Activated T-helper 2 cell treated with anti-CD3 and anti-CD28 coated beads, Interferon-gamma antibody, Interleukin-2, Interleukin-4, amounts not matched to agents 10 μg/mL and 5 μg/mL and 100 μg/mL, durations not matched to agents 14 hours and 24 hours and 36 hours (primary cell): ENCODE measurements at regions of chr5 and their contacts with region 1.

Region 1: DNA sequence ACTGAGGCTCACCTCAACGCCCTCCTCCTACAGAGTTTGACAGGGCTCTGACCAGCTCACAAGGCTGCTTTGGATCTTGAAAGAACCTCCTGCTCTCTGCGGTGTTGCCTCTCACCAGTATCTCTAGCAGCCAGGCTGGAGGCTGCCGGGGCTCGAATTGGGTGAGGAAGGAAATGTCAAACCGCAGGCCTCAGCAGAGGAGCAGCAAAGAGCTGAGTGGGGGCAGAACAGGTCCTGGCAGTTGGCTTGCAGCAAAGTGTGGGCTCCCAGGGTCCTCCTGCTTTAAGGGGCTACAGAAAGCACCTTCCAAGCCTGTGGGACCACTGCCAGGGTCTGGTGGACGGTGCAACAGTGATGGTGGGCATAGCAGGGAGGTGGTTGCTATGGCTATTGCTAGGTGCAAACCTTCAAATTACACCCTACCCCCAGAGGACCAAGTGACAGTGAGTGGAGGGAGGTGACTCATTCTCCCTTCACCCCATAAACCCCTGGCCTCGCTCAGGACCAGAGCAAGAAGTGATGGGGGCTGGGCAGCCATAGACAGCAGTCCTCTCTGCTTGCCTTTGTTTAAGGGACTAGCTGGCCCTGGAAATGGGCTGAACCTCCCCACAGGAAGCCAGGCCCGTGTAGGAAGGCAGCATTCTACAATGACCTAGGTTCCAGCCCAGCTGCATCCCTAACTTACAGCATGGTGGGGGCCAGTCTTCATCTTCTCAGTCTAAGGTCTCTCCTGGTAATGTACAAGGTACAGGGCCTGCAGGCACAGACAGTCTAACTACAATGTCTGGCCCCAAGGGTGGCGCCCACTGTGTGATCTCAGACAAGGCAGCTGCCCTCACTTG is 18.7 kb downstream of the LCP2 start:
- DNase-seq: peak; percentile 90
- H3K4me3 Mint-ChIP-seq: peak overlapping the region; percentile 63
- H3K27ac Mint-ChIP-seq: peak overlapping the region; percentile 98
- H3K4me1 Mint-ChIP-seq: peaks cover 86% of the 10 kb centered on the region
- H3K27me3 Mint-ChIP-seq: no peaks in the 10 kb centered on the region

Region 2: GRCh38 chr5:170293273-170293672 is 14.4 kb after region 1 on chr5:
- intact Hi-C with region 1: loop called (anchors 1 kb)
- DNase-seq: peak; percentile 60
- H3K4me3 Mint-ChIP-seq: peak overlapping the region; percentile 98
- H3K27ac Mint-ChIP-seq: peak overlapping the region; percentile 92
- H3K4me1 Mint-ChIP-seq: peaks cover 76% of the 10 kb centered on the region
- H3K27me3 Mint-ChIP-seq: no peaks in the 10 kb centered on the region

Region 3: GRCh38 chr5:170312666-170313065 is 33.8 kb after region 1 on chr5:
- intact Hi-C with region 1: loop called (anchors 1 kb)
- DNase-seq: no peak
- H3K4me3 Mint-ChIP-seq: peak overlapping the region; percentile 75
- H3K27ac Mint-ChIP-seq: peak overlapping the region; percentile 88
- H3K4me1 Mint-ChIP-seq: peaks cover 50% of the 10 kb centered on the region
- H3K27me3 Mint-ChIP-seq: no peaks in the 10 kb centered on the region

Region 4: DNA sequence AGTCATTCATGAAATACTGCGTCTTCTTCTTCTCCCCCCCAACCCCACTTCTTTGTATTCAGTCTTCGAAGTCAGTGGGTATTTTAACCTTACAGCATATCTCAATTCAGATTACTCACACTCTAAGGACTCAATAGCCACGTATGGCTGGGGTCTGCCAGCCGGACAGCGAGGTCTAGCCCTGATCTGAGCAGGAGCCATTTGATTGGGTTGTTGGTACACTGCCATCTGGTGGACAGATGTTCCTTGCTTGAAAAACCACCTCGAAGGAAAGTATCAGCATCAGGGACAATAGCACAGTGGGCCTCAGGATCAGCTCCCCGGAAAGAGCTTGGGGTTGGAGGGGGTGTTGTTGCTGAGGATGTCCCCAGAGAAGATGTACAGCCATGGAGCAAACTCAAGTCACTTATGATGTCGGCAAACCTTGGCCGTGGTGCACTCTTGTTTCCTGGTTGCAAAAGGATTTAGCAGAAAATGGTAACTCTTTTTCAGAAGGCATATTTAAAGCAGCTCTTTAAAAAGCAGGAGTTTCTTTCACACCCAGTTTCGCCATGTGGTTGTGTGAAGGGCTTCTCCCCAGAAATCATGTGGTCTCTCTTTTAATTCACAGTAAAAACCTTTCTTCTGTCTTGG is 142.1 kb after region 1 on chr5:
- intact Hi-C with region 1: loop called (anchors 2 kb)
- DNase-seq: peak; percentile 22
- H3K4me3 Mint-ChIP-seq: no peak overlapping the region
- H3K27ac Mint-ChIP-seq: no peak overlapping the region
- H3K4me1 Mint-ChIP-seq: peaks cover 2% of the 10 kb centered on the region
- H3K27me3 Mint-ChIP-seq: peaks cover 35% of the 10 kb centered on the region